Activated CD8-positive, alpha-beta T cell treated with anti-CD3 and anti-CD28 coated beads for 36 hours (primary cell): ENCODE measurements at regions of chr6 and their contacts with region 1.

Region 1: DNA sequence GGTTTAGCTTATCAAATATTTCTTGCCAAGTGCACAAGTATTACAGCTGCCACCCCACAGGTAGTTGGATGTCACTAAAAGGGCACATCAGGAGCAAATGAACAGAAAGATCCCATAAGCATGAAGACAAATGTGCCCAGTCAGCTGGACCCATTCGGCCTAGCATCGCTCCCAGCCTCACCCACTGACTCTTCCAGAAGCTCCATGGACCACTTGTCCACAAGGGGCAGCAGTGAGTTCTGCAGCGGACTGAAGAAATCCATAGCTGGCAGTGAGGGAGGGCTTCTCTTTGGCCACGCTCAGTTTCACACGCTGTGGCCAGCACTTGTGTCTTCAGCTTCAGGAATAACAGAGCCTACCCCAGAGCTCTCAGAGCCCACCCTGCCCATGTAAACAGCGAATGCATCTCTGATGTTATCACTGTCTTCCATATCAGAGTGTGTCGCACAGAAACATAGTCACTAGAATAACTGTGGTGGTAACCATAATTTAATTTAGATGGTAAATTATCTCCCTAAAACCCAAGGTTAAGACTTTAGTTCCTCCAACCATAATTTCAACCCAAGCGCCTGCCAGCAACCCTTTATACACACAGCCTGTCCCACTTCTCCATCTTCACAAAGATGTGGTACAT is 15.8 kb downstream of the CGA start:
- DNase-seq: peak; percentile 77
- ATAC-seq: peak; percentile 78
- H3K4me3 Mint-ChIP-seq: no peak overlapping the region
- H3K27ac Mint-ChIP-seq: no peak overlapping the region
- H3K4me1 Mint-ChIP-seq: no peaks in the 10 kb centered on the region
- H3K27me3 Mint-ChIP-seq: peaks cover 20% of the 10 kb centered on the region
- CTCF ChIP-seq: peak; percentile 85

Region 2: DNA sequence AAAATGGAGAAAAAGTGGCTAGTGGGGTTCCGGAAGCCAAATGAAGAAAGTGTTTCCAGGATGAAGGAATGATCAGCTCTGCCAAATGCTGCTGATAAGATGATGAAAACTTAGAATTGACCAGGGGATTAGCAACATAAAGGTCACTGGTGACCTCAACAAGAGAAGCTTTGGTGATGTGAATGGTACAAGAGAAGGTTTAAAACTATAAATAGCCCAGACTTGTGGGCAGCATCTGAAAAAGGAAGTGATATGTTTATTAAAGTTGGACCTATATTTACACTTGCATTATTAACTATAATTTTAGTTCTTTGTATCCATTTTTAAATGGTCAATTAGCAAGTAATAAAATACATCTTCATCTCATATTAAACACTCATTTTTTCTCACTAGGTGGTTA is 29.3 kb before region 1 on chr6:
- CTCF ChIA-PET with region 1: interaction called, 11 read pairs
- POLR2A ChIA-PET with region 1: no interaction called
- intact Hi-C with region 1: no loop called
- DNase-seq: no peak
- ATAC-seq: no peak
- H3K4me3 Mint-ChIP-seq: no peak overlapping the region
- H3K27ac Mint-ChIP-seq: no peak overlapping the region
- H3K4me1 Mint-ChIP-seq: no peaks in the 10 kb centered on the region
- H3K27me3 Mint-ChIP-seq: peaks cover 10% of the 10 kb centered on the region
- CTCF ChIP-seq: no peak

Region 3: DNA sequence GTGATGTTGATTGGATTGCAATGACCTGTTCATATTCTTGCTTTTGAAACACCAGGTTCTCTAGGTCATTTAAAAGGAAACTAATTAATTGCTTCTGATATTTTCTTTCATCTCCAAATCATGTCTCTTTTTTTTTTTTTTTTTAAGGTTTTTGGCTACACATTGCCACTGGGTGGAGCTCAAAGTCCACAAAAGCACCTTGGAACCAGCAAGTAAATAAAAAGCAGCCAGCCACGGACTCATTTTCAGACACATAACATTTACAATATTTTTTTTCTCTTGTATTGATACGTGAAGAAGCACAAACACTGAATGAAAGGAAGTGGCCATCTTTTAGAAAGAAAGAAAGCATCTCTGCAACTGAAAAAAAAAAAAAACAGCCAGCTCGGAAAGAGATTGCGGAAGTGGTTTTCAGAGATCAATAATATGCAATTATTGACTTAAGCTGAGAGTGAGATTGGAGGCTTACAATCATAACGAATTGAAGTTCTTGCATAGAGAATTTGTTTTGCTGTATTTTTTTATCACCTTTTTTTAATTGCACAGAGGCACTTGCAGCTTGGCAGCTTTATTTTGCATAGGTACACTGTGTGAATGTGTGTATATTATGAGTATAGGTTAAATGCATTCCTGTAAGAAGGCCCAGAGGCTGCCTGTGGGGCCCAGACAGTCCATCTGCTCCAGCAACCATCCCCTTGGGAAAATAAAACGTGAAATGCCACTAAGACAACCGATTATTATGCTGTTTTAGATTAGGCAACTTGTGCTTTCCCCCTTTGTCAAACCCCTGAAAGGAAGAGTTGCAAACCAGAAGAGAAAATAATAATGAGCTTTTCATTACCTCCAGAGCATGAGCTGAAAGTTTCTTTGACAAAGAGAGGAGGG is 12.4 kb before region 1 on chr6:
- CTCF ChIA-PET with region 1: interaction called, 50 read pairs
- POLR2A ChIA-PET with region 1: no interaction called
- intact Hi-C with region 1: no loop called
- DNase-seq: peak; percentile 58
- ATAC-seq: no peak
- H3K4me3 Mint-ChIP-seq: no peak overlapping the region
- H3K27ac Mint-ChIP-seq: no peak overlapping the region
- H3K4me1 Mint-ChIP-seq: no peaks in the 10 kb centered on the region
- H3K27me3 Mint-ChIP-seq: peaks cover 12% of the 10 kb centered on the region
- CTCF ChIP-seq: peak; percentile 63

Region 4: GRCh38 chr6:87093651-87094050 is 14.6 kb after region 1 on chr6:
- CTCF ChIA-PET with region 1: interaction called, 19 read pairs
- POLR2A ChIA-PET with region 1: no interaction called
- intact Hi-C with region 1: no loop called
- DNase-seq: no peak
- ATAC-seq: no peak
- H3K4me3 Mint-ChIP-seq: no peak overlapping the region
- H3K27ac Mint-ChIP-seq: no peak overlapping the region
- H3K4me1 Mint-ChIP-seq: no peaks in the 10 kb centered on the region
- H3K27me3 Mint-ChIP-seq: peaks cover 15% of the 10 kb centered on the region
- CTCF ChIP-seq: no peak

Region 5: GRCh38 chr6:87099472-87099871 is 20.4 kb after region 1 on chr6:
- CTCF ChIA-PET with region 1: interaction called, 26 read pairs
- POLR2A ChIA-PET with region 1: interaction called, 3 read pairs
- intact Hi-C with region 1: no loop called
- DNase-seq: no peak
- ATAC-seq: no peak
- H3K4me3 Mint-ChIP-seq: no peak overlapping the region
- H3K27ac Mint-ChIP-seq: no peak overlapping the region
- H3K4me1 Mint-ChIP-seq: no peaks in the 10 kb centered on the region
- H3K27me3 Mint-ChIP-seq: peaks cover 9% of the 10 kb centered on the region
- CTCF ChIP-seq: no peak

Region 6: DNA sequence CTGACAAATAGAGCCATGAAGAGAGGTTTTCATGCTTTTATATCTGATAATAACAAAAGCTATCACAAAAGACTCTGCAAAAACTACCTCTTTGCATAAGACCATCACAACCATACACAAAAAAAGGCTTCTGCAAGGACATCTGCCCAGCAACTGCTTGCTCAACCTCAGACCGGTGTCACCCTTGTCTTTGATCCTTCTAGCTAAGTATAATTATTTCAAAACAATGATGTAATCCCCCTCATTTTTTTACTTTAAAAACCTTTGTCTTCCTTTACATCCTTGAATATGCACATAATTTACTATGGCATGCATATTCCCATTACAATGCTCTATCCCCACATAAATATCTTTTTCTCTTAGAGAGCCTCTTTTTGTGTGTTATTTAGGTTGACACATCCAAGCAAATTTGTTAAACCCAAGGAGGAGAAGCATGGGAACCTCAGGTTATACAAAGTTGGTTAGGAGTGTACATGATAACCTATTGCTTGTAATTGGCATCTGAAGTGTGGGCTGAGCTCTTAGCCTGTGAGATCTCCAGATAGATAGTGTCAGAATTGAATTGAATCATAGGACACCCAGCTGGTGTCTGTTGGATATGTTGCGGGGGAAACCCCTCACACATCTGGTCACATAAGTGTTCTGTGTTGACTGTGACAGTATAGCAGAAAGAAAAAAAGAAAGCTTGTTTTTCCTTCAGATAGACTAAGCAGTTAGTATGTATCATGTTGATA is 36.5 kb after region 1 on chr6:
- CTCF ChIA-PET with region 1: interaction called, 14 read pairs
- POLR2A ChIA-PET with region 1: no interaction called
- intact Hi-C with region 1: no loop called
- DNase-seq: peak; percentile 35
- ATAC-seq: peak; percentile 91
- H3K4me3 Mint-ChIP-seq: no peak overlapping the region
- H3K27ac Mint-ChIP-seq: no peak overlapping the region
- H3K4me1 Mint-ChIP-seq: peaks cover 2% of the 10 kb centered on the region
- H3K27me3 Mint-ChIP-seq: peaks cover 9% of the 10 kb centered on the region
- CTCF ChIP-seq: no peak

Region 7: GRCh38 chr6:87139236-87139635 is 60.1 kb after region 1 on chr6:
- CTCF ChIA-PET with region 1: interaction called, 11 read pairs
- POLR2A ChIA-PET with region 1: no interaction called
- intact Hi-C with region 1: no loop called
- DNase-seq: peak; percentile 36
- ATAC-seq: peak; percentile 80
- H3K4me3 Mint-ChIP-seq: no peak overlapping the region
- H3K27ac Mint-ChIP-seq: no peak overlapping the region
- H3K4me1 Mint-ChIP-seq: peaks cover 2% of the 10 kb centered on the region
- H3K27me3 Mint-ChIP-seq: peaks cover 5% of the 10 kb centered on the region
- CTCF ChIP-seq: peak; percentile 89